HCT116 (cell line): ENCODE measurements at regions of chr12 and their contacts with region 1.

Region 1: GRCh38 chr12:103503977-103504376 is 8.2 kb upstream of the C12orf42 start:
- DNase-seq: peak; percentile 16
- ATAC-seq: peak; percentile 87
- H3K4me3 ChIP-seq: no peak overlapping the region
- H3K27ac ChIP-seq: no peak overlapping the region
- H3K4me1 ChIP-seq: no peaks in the 10 kb centered on the region
- H3K27me3 ChIP-seq: no peaks in the 10 kb centered on the region; the same call in 1 of the 2 replicates
- CTCF ChIP-seq: peak; percentile 54 to 80 (median 72); a peak in 5 of 6 replicates
- POLR2A ChIP-seq: no peak
- RAD21 ChIP-seq: peak; percentile 67

Region 2: DNA sequence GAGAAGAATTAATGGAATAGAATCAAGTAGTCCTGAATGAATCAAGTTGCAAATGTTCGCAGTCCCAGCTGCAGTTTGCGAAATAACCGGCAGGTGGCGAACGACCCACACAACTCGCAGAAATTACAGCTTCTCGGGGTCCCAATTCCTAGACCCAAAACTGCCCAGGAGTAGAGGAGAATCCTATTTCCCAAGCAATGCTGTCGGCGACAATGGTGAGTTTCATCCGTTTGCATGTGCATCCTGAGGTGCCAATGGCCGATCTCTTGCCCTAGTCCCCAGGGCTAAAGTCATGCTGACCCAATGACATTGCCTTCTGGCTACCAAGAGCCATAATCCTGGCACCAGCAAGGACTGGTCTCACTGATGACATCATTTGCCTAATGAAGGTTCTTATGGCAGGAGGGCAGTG is 555.0 kb before region 1 on chr12:
- CTCF ChIA-PET with region 1: interaction called, 3 read pairs
- POLR2A ChIA-PET with region 1: no interaction called
- RAD21 ChIA-PET with region 1: no interaction called
- intact Hi-C with region 1: loop called (anchors 5 kb)
- DNase-seq: peak; percentile 23
- ATAC-seq: peak; percentile 59; the same call in 1 of the 2 replicates
- H3K4me3 ChIP-seq: no peak overlapping the region
- H3K27ac ChIP-seq: no peak overlapping the region
- H3K4me1 ChIP-seq: no peaks in the 10 kb centered on the region
- H3K27me3 ChIP-seq: peaks cover 26% of the 10 kb centered on the region
- CTCF ChIP-seq: peak; percentile 63 to 95 (median 84)
- POLR2A ChIP-seq: no peak
- RAD21 ChIP-seq: peak; percentile 77

Region 3: DNA sequence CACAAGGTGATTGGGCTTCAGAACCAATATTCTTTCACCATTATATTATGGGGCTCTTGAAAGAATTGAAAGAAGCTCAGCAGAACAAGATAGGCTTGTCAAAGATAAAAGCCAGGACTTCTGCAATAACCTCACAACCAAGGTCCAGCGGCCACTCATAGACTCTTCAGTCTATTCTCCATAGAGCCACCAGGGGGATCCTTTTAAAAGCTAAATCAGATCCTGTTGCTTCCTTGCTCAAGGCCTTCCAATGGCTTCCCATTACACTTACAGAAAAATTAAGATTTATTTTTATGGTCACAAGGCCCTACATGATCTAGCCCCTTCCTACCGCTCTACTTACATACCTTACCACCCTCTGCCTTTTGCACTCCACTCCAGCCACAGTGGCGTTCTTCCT is 177.8 kb before region 1 on chr12:
- CTCF ChIA-PET with region 1: no interaction called
- POLR2A ChIA-PET with region 1: no interaction called
- RAD21 ChIA-PET with region 1: no interaction called
- intact Hi-C with region 1: loop called (anchors 1 kb)
- DNase-seq: peak; percentile 18
- ATAC-seq: peak; percentile 83
- H3K4me3 ChIP-seq: no peak overlapping the region
- H3K27ac ChIP-seq: no peak overlapping the region
- H3K4me1 ChIP-seq: no peaks in the 10 kb centered on the region
- H3K27me3 ChIP-seq: peaks cover 7% of the 10 kb centered on the region; the same call in 1 of the 2 replicates
- CTCF ChIP-seq: peak; percentile 17 to 53 (median 53); a peak in 5 of 6 replicates
- POLR2A ChIP-seq: no peak
- RAD21 ChIP-seq: peak; percentile 47

Region 4: DNA sequence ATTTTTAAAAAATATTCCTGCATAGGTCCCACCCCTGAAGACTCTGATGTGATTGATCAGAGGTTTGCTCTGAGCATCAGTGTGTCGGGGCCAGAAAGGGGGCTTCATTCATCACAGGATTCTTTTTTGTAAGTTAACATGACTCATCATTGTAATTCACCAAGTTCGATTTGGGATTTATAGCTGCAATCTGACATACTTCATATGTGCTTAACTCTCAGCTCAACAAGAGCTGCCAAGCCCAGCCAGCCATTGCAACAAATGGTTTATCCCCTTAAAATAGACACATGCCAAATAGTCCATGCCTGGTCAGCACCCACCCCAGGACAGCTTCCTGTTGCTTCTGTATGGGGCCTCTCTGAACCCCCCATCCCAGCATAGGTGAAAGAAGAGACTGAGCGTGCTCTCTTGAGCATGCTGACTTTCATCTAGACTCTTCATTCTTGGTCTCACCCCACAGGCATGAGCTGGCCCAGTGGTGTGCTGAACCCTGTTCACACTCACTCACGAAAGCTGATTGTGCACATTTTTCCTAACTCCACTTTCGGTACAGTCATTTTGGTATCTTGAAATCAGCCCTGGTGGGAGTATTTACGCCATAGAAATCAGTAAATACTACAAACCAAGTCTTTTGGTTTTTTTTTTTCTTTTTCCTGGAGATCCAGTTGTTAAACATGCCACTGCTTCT is 184.5 kb after region 1 on chr12:
- CTCF ChIA-PET with region 1: no interaction called
- POLR2A ChIA-PET with region 1: no interaction called
- RAD21 ChIA-PET with region 1: no interaction called
- intact Hi-C with region 1: no loop called
- DNase-seq: no peak
- ATAC-seq: no peak
- H3K4me3 ChIP-seq: no peak overlapping the region
- H3K27ac ChIP-seq: no peak overlapping the region
- H3K4me1 ChIP-seq: no peaks in the 10 kb centered on the region
- H3K27me3 ChIP-seq: no peaks in the 10 kb centered on the region
- CTCF ChIP-seq: no peak
- POLR2A ChIP-seq: no peak
- RAD21 ChIP-seq: no peak